ENCODE measurements at regions of chr3 and their contacts with region 1.

Region 1: DNA sequence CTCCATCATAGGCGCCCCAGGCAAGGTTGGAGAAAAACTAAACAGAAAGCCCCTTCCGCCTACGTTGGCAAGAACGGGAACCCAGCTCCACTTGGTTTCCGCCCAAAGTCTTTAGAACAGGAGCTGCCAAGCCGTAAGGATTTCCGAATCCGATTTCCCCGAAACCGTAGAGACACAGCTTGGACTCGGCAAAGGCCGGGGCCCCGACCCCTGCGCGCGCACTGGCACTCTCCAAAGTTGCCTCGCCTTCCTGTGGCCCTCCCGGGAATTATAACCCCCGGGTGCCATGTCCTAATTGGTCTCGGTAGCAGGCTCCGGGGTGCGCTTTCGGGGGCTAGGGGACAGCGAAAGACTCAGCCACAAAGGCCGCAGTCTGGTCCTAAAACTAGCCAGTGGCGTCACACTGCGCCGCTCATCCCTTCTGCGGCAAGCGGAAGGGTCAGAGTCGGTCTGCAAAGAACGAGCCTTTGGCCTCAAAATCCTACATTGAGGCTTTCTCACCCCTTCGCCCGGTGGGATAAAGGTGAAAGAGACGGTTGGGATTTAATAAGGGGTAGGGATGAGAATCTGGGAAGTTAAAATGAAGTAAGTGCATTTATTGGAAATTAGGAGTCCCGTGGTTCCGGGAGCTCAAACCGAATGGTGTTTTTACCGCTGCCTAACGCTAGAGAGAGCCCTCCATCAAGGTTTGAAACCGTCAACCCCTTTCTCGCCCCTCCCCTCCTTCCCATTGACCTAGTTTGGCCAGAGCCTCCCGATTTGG is 6.8 kb downstream of the BCL6 start:
- DNase-seq: peak in 8 of 9 donors; percentile 39 to 70 (median 66)
- ATAC-seq: peak; percentile 60
- H3K4me3 ChIP-seq: peak overlapping the region; percentile 79
- H3K4me3 Mint-ChIP-seq: peak overlapping the region; percentile 86 to 100 (median 98)
- H3K27ac ChIP-seq: peak overlapping the region; percentile 72
- H3K27ac Mint-ChIP-seq: peak overlapping the region; percentile 83 to 100 (median 100)
- H3K4me1 ChIP-seq: peaks cover 12 to 23% of the 10 kb centered on the region in 2 donors
- H3K4me1 Mint-ChIP-seq: peaks cover 27 to 63% (median 43%) of the 10 kb centered on the region in 7 donors
- H3K27me3 ChIP-seq: no peaks in the 10 kb centered on the region
- H3K27me3 Mint-ChIP-seq: peaks cover 0 to 3% (median 0%) of the 10 kb centered on the region in 5 donors

Region 2: GRCh38 chr3:185744997-185745843 is 1993.3 kb before region 1 on chr3:
- CTCF ChIA-PET with region 1: no interaction called
- POLR2A ChIA-PET with region 1: no interaction called
- intact Hi-C with region 1: no loop called
- DNase-seq: no peak
- ATAC-seq: no peak
- H3K4me3 ChIP-seq: no peak overlapping the region
- H3K4me3 Mint-ChIP-seq: no peak overlapping the region
- H3K27ac ChIP-seq: no peak overlapping the region
- H3K27ac Mint-ChIP-seq: no peak overlapping the region
- H3K4me1 ChIP-seq: no peaks in the 10 kb centered on the region
- H3K4me1 Mint-ChIP-seq: peaks cover 0 to 6% (median 0%) of the 10 kb centered on the region in 7 donors
- H3K27me3 ChIP-seq: peaks cover 0 to 3% of the 10 kb centered on the region in 2 donors
- H3K27me3 Mint-ChIP-seq: peaks cover 7 to 23% (median 10%) of the 10 kb centered on the region in 5 donors

Region 3: DNA sequence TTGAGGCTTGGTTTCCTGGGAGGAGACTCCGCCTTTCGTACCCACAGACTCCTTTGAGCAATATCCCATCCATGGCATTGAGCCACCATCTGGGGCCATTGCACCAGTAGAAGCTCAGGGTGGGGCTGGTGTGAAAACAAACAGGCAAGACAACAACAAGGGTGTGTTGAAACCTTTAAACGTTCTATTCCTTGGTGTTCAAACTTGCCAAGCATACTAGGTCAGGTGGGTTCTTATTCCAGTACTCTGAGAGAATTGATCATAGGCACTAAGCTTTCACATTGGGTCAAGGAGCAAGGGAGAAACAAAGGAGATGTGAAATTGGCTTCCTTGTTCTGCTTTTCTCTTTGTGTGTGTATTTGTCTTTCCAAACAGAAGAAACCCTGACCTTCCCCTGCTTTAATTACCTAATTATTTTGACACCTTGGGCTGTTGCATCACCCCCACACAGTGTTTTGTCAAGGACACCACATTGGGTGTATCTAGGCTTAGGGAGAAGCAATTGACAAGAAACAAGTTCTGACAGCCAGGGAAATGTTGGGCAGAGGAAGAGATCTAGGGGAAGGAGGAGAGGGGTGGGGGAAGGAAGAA is 111.9 kb after region 1 on chr3:
- CTCF ChIA-PET with region 1: no interaction called
- POLR2A ChIA-PET with region 1: no interaction called
- intact Hi-C with region 1: no loop called
- DNase-seq: no peak
- ATAC-seq: no peak
- H3K4me3 ChIP-seq: no peak overlapping the region
- H3K4me3 Mint-ChIP-seq: no peak overlapping the region
- H3K27ac ChIP-seq: no peak overlapping the region
- H3K27ac Mint-ChIP-seq: no peak overlapping the region
- H3K4me1 ChIP-seq: no peaks in the 10 kb centered on the region
- H3K4me1 Mint-ChIP-seq: peaks cover 0 to 19% (median 0%) of the 10 kb centered on the region in 7 donors
- H3K27me3 ChIP-seq: no peaks in the 10 kb centered on the region
- H3K27me3 Mint-ChIP-seq: peaks cover 0 to 7% (median 0%) of the 10 kb centered on the region in 5 donors

Region 4: DNA sequence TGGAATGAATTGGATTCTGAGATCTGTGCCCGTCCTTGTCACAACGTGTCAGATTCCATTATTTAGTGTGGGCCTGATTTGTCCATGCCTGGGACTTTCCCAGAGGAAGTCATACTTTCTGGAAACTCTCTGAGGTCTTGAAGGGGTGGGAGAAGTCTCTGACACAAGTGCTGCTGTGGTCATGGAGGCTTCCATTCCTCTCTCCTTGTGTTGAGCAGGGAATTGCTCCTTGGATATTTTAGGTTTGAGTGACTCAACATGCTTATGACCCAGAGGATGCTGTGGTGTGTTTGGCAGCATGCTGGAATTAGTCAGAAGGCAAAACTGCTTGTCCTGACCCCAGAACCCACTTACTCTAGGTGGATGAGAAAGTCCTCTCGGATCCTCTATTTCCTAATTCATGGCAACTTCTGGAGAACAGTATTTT is 547.6 kb after region 1 on chr3:
- CTCF ChIA-PET with region 1: interaction called, 6 read pairs
- POLR2A ChIA-PET with region 1: no interaction called
- intact Hi-C with region 1: loop called in 1 of 2 experiments (anchors 2 kb)
- DNase-seq: no peak
- ATAC-seq: no peak
- H3K4me3 ChIP-seq: no peak overlapping the region
- H3K4me3 Mint-ChIP-seq: no peak overlapping the region
- H3K27ac ChIP-seq: no peak overlapping the region
- H3K27ac Mint-ChIP-seq: peak overlapping the region in 2 of 9 donors; percentile 14 to 39
- H3K4me1 ChIP-seq: peaks cover 7% of the 10 kb centered on the region in 2 donors
- H3K4me1 Mint-ChIP-seq: peaks cover 19 to 49% (median 28%) of the 10 kb centered on the region in 7 donors
- H3K27me3 ChIP-seq: no peaks in the 10 kb centered on the region
- H3K27me3 Mint-ChIP-seq: no peaks in the 10 kb centered on the region

Region 5: DNA sequence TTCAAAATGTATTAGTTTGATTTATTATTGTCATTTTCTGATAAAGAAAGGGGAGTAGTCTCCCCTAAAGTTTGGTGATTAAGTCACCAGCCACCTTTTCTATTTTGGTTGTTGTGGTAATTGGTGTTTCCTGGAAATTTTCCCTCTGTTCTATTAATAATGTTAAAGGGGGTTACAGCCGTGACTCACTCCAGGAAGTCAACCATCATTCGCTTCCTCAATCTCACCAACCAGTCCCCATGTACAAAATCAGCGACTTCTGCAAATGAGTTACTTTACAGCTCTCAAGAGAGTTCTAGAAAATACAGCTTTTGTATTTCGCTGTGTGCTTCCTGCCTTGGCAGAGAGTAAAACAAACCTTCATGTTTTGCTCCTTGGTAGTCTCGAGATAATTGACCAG is 700.6 kb after region 1 on chr3:
- CTCF ChIA-PET with region 1: interaction called, 5 read pairs
- POLR2A ChIA-PET with region 1: no interaction called
- intact Hi-C with region 1: loop called in 1 of 2 experiments (anchors 2 kb)
- DNase-seq: peak in 5 of 9 donors; percentile 6 to 28 (median 14)
- ATAC-seq: peak; percentile 92
- H3K4me3 ChIP-seq: no peak overlapping the region
- H3K4me3 Mint-ChIP-seq: peak overlapping the region in 9 of 10 donors; percentile 47 to 76 (median 62)
- H3K27ac ChIP-seq: peak overlapping the region; percentile 9
- H3K27ac Mint-ChIP-seq: peak overlapping the region; percentile 28 to 83 (median 60)
- H3K4me1 ChIP-seq: peaks cover 4 to 31% of the 10 kb centered on the region in 2 donors
- H3K4me1 Mint-ChIP-seq: peaks cover 19 to 52% (median 27%) of the 10 kb centered on the region in 7 donors
- H3K27me3 ChIP-seq: no peaks in the 10 kb centered on the region
- H3K27me3 Mint-ChIP-seq: no peaks in the 10 kb centered on the region

Region 6: DNA sequence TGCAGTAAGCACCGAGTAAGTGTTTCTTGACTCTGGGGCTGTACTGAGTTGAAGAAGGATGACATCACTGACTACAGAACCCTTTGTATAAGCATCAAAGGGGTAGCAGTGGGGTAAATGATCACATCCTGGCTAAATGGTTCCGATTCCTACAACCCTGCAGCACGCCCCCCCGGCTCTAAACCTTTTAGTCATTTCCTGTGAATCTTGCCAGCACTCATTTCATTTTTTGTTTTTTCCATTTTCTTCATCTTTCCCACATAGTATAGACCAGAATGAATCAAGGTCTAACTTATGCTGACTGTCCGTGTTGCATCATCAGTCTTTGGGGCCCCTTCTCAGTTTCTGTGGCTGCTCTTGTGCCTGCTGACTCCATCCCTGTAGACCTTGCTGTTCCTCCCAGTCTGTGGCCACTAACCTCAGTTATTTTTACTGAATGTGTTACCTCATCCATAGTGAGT is 1050.1 kb after region 1 on chr3:
- CTCF ChIA-PET with region 1: no interaction called
- POLR2A ChIA-PET with region 1: no interaction called
- intact Hi-C with region 1: loop called (anchors 1 kb)
- DNase-seq: peak in 8 of 9 donors; percentile 33 to 77 (median 64)
- ATAC-seq: peak; percentile 94
- H3K4me3 ChIP-seq: no peak overlapping the region
- H3K4me3 Mint-ChIP-seq: no peak overlapping the region
- H3K27ac ChIP-seq: no peak overlapping the region
- H3K27ac Mint-ChIP-seq: no peak overlapping the region
- H3K4me1 ChIP-seq: peaks cover 9 to 14% of the 10 kb centered on the region in 2 donors
- H3K4me1 Mint-ChIP-seq: peaks cover 0 to 10% (median 0%) of the 10 kb centered on the region in 7 donors
- H3K27me3 ChIP-seq: no peaks in the 10 kb centered on the region
- H3K27me3 Mint-ChIP-seq: no peaks in the 10 kb centered on the region

Region 7: GRCh38 chr3:189041482-189042090 is 1303.1 kb after region 1 on chr3:
- CTCF ChIA-PET with region 1: interaction called, 43 read pairs
- POLR2A ChIA-PET with region 1: no interaction called
- intact Hi-C with region 1: loop called (anchors 1 kb)
- DNase-seq: peak; percentile 33 to 74 (median 70)
- ATAC-seq: peak; percentile 97
- H3K4me3 ChIP-seq: no peak overlapping the region
- H3K4me3 Mint-ChIP-seq: peak overlapping the region in 1 of 10 donors; percentile 61
- H3K27ac ChIP-seq: no peak overlapping the region
- H3K27ac Mint-ChIP-seq: peak overlapping the region in 3 of 9 donors; percentile 9 to 71 (median 41)
- H3K4me1 ChIP-seq: no peaks in the 10 kb centered on the region
- H3K4me1 Mint-ChIP-seq: peaks cover 0 to 52% (median 4%) of the 10 kb centered on the region in 7 donors
- H3K27me3 ChIP-seq: no peaks in the 10 kb centered on the region
- H3K27me3 Mint-ChIP-seq: no peaks in the 10 kb centered on the region

Region 8: DNA sequence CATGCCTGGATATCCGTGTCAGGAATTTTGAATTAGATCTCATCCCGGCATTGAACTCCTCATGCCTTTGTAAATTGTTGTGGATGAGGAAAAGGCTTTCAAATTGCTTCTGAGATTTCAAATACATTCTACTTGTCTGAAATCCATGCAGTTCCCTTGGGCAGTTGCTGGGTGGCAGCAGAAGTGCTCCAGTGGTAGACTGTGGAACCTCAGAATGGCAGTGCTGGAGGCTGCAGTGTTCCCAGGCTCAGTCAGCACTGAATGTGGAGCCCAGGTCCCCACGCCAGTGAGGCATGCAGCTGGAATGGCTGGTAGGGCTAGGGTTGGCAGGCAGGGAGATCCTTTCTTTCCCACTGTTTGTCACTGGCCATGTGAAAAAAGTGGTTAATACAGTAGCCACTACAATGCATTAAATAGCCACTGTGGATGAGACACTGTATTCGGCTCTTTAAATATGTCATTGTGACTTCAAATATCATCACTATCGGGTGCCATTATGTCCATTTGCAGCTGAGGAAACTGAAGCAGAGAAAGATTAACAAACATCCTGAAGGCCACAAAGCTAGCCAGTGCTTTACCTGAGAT is 1531.8 kb after region 1 on chr3:
- CTCF ChIA-PET with region 1: interaction called, 3 read pairs
- POLR2A ChIA-PET with region 1: no interaction called
- intact Hi-C with region 1: loop called in 1 of 2 experiments (anchors 2 kb)
- DNase-seq: peak in 6 of 9 donors; percentile 18 to 47 (median 32)
- ATAC-seq: peak; percentile 53
- H3K4me3 ChIP-seq: no peak overlapping the region
- H3K4me3 Mint-ChIP-seq: no peak overlapping the region
- H3K27ac ChIP-seq: no peak overlapping the region
- H3K27ac Mint-ChIP-seq: peak overlapping the region in 1 of 9 donors; percentile 27
- H3K4me1 ChIP-seq: peaks cover 0 to 15% of the 10 kb centered on the region in 2 donors
- H3K4me1 Mint-ChIP-seq: peaks cover 5 to 34% (median 20%) of the 10 kb centered on the region in 7 donors
- H3K27me3 ChIP-seq: no peaks in the 10 kb centered on the region
- H3K27me3 Mint-ChIP-seq: no peaks in the 10 kb centered on the region

Measured in naive thymus-derived CD4-positive, alpha-beta T cell (primary cell).